ENCODE measurements at regions of chr2 and their contacts with region 1.

Region 1: DNA sequence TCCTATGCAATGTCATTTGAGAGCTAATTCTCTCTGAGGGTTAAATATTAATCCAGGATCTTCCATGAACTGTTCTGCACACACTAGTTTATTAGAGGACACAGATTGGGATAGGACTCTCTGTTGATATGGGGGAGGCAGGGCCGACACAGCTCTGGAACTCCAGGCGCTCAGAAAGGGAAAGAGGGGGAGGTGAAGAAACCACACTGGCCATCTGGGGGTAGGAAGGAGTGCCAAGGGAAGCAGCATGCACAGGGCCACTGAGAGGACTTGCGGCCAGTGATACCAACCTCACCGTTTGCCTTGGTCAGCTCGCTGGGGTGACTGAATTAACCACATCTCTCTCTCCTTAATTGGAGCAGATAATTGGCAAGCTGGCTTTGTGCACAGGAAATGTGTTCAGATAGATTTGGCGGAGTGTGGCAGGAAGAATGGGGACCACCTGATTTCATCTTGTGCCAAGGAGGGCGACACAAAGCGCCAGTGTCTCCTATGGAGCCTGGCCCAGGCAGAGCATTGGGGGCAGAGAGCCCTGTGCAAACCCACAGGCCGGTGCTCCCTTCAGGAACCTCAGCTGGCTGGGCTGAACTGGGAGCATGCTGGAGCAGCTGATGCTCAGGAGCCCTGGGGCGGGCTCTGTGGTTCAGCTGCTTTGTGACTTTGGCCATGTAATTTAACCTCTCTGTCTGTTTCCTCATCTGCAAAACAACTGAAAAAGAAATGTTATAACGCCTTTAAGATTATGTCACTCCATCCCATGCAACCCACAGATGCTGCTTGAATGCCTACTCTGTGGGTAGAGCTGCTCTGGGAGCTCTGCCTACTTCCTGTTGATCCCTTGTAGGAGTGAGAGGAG is 114.7 kb upstream of the STON1 start:
- DNase-seq: peak; percentile 79
- ATAC-seq: peak; percentile 80
- H3K4me3 ChIP-seq: peak overlapping the region; percentile 32 to 68 (median 53)
- H3K27ac ChIP-seq: peak overlapping the region; percentile 80
- H3K4me1 ChIP-seq: peaks cover 77% of the 10 kb centered on the region
- H3K27me3 ChIP-seq: no peaks in the 10 kb centered on the region
- CTCF ChIP-seq: 0 out of 2 replicates have a peak, but pooled peaks have one; percentile 4
- EP300 ChIP-seq: peak in 1 of 2 experiments; percentile 41; a peak in 2 of 4 replicates
- POLR2A ChIP-seq: peak; percentile 59 to 83
- RAD21 ChIP-seq: no peak

Region 2: GRCh38 chr2:48377646-48378045 is 37.6 kb before region 1 on chr2:
- CTCF ChIA-PET with region 1: no interaction called
- POLR2A ChIA-PET with region 1: no interaction called
- in situ Hi-C with region 1: no loop called
- intact Hi-C with region 1: loop called (anchors 5 kb)
- DNase-seq: no peak
- ATAC-seq: no peak
- H3K4me3 ChIP-seq: no peak overlapping the region
- H3K27ac ChIP-seq: no peak overlapping the region
- H3K4me1 ChIP-seq: no peaks in the 10 kb centered on the region
- H3K27me3 ChIP-seq: no peaks in the 10 kb centered on the region
- CTCF ChIP-seq: no peak
- EP300 ChIP-seq: no peak
- POLR2A ChIP-seq: no peak
- RAD21 ChIP-seq: no peak

Region 3: DNA sequence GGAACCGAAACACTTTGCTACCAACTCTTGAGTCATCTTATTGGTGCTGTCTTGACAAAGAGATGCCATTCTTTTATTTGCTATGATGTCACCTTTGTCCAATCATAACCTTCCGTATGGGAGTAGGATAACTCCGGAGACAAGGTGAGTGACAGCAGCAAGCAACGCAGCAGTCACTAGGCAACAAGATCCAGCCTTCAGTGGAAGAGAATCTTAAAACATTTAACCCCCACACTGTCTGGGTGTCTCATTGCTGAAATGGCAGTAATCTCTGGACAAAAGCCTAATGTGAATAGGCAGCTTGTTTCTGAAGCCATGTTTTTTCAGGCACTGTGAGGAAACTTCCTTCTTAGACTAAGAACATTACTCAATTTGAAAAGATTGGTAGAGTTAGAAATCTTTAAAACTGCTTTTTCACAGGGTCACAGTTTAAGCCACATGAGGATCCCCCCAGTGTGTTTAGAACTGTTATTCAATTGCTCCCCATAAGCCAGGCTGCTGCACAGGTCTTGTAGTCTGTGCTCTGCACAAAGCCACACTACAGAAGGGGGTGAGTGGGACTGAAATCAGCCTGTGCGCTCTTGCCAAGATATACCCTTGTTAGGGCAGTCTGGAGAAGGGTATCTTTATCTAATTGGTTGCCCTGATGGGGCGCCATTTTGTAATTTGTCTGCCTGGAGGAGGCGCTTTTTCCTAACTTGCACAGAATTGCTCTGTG is 16.8 kb before region 1 on chr2:
- CTCF ChIA-PET with region 1: no interaction called
- POLR2A ChIA-PET with region 1: no interaction called
- in situ Hi-C with region 1: no loop called
- intact Hi-C with region 1: no loop called
- DNase-seq: no peak
- ATAC-seq: no peak
- H3K4me3 ChIP-seq: no peak overlapping the region
- H3K27ac ChIP-seq: no peak overlapping the region
- H3K4me1 ChIP-seq: peaks cover 9% of the 10 kb centered on the region
- H3K27me3 ChIP-seq: no peaks in the 10 kb centered on the region
- CTCF ChIP-seq: no peak
- EP300 ChIP-seq: no peak
- POLR2A ChIP-seq: no peak
- RAD21 ChIP-seq: no peak

Measured in HepG2 (cell line).